AG04450 (cell line): ENCODE measurements at regions of chr9 and their contacts with region 1.

Region 1: DNA sequence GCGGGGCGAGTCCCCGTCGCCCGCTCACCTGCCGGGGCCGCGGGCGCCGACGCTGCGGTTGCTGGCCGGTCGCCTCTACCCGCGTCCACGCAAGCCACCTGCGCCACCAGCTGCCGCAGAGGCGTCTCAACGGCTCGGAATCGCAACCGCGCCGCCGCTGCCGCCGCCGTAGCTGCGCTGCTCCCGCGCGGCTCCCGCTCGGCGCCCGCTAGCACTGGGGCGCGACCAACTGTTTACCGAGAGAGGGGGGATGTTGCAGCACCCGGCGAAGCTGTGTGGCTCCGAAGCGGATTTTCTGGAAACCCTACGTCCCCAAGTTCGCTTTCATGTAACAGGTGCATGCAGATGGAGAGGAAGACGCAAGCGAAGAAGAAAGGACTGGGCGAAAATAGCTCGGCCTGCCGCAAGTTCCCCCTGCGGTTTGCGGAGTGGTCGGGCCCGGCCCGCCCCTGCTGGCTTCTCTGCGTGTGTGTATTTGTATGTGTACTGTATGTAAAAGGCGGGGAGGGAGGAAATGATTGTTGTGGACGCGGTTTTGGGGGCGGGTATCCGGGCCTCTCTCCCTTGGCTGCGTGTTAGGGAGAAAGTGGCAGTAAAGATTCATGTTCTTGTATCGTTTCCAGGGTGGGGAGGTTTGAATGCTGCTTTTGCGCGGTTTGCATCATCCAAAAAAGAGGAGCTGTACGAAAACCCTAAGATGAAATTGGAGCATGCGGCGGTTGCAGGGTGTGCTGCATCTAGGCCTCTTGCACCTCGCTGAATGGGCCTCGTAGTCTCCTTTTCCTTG is at the start of gene PSIP1:
- DNase-seq: peak; percentile 65
- H3K4me3 ChIP-seq: peak within 1 kb of the TSS; percentile 91
- H3K27ac ChIP-seq: peak within 1 kb of the TSS; percentile 90
- H3K27me3 ChIP-seq: no peaks in the 10 kb centered on the region
- CTCF ChIP-seq: no peak
- polyA plus RNA-seq, gene PSIP1: 32.7 and 57.3 TPM in 2 replicates

Region 2: DNA sequence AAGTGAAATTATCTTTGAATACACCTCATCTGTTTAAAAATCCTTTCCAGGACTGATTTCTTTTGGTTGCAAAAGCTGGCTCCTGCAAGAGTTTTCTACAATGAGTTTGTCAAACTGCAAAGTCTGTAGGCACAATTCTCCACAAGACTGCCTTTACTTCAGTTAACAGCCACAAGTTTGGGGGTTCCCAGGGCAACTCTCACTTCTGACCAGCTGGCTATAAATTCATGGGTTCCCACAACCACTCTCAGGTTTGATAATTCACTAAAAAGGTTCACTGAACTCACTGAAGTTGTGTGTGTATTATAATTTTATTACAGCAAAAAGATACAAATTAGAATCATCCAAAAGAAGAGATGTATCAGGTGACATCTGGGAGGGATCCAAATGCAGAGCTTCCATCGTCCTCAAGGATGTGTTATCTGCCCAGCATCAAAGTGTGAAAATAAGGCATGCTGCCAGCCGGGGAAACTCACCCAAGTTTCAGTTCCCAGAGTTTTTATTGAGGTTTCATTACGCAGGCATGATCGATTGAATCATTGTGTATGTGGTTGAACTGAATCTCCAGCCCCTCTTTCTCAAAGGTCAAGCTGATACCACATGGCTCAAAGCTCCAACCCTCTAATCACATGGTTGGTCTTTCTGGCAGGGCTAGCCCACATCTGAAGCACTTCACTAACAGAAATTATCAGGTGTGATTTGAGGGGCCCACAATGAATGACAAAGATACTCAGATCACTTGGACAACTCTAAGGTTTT is 18.8 kb after region 1 on chr9:
- CTCF ChIA-PET with region 1: no interaction called
- POLR2A ChIA-PET with region 1: no interaction called
- DNase-seq: no peak
- H3K4me3 ChIP-seq: no peak overlapping the region
- H3K27ac ChIP-seq: no peak overlapping the region
- H3K27me3 ChIP-seq: no peaks in the 10 kb centered on the region
- CTCF ChIP-seq: no peak

Region 3: GRCh38 chr9:15552636-15553527 is 41.9 kb after region 1 on chr9 and contains the start of gene CCDC171:
- CTCF ChIA-PET with region 1: interaction called, 4 read pairs
- POLR2A ChIA-PET with region 1: interaction called, 14 read pairs
- DNase-seq: peak; percentile 92
- H3K4me3 ChIP-seq: peak within 1 kb of the TSS; percentile 81
- H3K27ac ChIP-seq: peak within 1 kb of the TSS; percentile 84
- H3K27me3 ChIP-seq: no peaks in the 10 kb centered on the region
- CTCF ChIP-seq: no peak
- polyA plus RNA-seq, gene CCDC171: 0.72 and 0.81 TPM in 2 replicates